A549 (cell line): ENCODE measurements at regions of chr15 and their contacts with region 1.

Region 1: GRCh38 chr15:75801859-75802593 is 41.2 kb upstream of the UBE2Q2 start:
- DNase-seq: peak; percentile 73 to 96
- ATAC-seq: peak; percentile 99 to 100
- H3K4me3 ChIP-seq: peak overlapping the region; percentile 34
- H3K27ac ChIP-seq: peak overlapping the region; percentile 16 to 66; a peak in 3 of 6 replicates
- H3K4me1 ChIP-seq: peaks cover 4% of the 10 kb centered on the region; the same call in 1 of the 3 replicates
- CTCF ChIP-seq: peak; percentile 98
- EP300 ChIP-seq: no peak
- POLR2A ChIP-seq: no peak
- RAD21 ChIP-seq: peak; percentile 94 to 99

Region 2: DNA sequence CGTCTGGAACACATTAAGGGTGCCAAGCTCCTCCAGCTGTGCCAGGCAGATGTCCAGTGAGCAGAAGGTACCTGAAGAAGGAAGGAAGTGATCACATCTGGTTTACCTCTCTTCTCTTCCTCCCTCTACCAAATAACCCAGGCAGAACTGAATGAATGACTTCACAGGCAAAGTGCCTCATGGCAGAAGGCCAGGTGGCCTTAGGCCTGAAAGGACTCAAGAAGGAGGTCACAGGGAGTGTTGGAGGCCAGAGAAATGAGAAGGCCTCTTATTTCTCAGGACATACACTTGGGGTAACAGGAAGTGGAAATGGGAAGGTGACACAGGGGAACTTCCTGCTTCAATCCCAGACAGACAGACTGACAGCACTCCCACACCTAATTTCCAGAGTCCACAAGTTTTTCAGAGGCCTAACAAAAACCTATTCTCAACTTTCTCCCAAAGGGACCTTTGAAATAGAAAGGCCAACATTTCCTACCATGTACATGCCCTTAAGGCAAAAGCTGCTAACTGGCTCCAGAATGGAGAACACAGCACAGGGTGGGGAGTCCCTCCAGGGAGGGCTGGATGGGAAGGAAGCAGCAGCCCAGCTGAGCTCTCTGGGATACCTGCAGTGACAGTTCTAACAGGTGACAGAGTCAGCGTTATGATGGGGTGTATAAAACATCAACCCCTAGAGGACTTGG is 333.0 kb before region 1 on chr15:
- CTCF ChIA-PET with region 1: no interaction called
- POLR2A ChIA-PET with region 1: no interaction called
- DNase-seq: no peak
- ATAC-seq: no peak
- H3K4me3 ChIP-seq: no peak overlapping the region
- H3K27ac ChIP-seq: no peak overlapping the region
- H3K4me1 ChIP-seq: no peaks in the 10 kb centered on the region
- CTCF ChIP-seq: no peak
- EP300 ChIP-seq: no peak
- POLR2A ChIP-seq: no peak
- RAD21 ChIP-seq: no peak

Region 3: DNA sequence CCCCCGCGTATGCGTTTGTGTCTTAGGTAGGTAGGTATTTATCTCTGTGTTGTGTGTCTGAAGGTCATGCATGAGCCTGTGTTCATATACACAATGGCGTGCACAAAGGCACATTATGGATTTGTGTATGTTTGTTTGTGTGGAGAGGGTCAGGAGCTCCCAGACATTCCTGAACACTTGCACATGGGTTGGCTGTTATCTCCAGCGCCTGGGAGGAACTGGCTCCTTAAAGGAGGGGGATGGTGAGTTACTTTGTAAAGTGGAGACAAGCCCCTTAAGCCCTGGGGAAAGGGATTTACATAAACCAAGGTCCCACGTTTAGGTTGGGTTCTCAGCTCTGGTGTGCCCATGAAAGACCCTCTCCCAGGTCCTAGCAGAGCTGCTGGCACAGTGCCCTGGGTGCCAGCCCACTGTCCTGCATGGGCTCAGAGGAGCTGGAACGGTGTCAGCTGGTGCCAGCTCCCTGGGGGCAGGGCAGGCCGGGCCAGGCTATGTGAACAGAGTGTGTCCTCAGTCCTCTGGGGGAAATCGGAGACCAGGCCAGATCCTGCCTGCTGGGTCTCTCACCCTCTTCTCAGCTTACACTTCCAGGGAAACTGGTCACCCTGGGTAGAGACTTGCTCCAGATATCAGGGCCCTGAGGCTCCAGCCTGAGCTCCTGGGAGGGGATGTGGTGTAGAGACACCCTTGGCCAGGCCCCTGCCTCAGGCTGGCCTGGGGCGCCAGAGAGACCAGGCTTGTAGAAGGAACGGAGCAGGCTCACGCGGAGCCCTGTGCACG is 129.2 kb before region 1 on chr15:
- CTCF ChIA-PET with region 1: interaction called, 13 read pairs
- POLR2A ChIA-PET with region 1: no interaction called
- DNase-seq: peak in 1 of 2 experiments; percentile 32
- ATAC-seq: peak; percentile 1 to 38; a peak in 3 of 6 replicates
- H3K4me3 ChIP-seq: no peak overlapping the region
- H3K27ac ChIP-seq: peak overlapping the region; percentile 66 to 78
- H3K4me1 ChIP-seq: peaks cover 32% of the 10 kb centered on the region
- CTCF ChIP-seq: no peak
- EP300 ChIP-seq: no peak
- POLR2A ChIP-seq: no peak
- RAD21 ChIP-seq: no peak

Region 4: DNA sequence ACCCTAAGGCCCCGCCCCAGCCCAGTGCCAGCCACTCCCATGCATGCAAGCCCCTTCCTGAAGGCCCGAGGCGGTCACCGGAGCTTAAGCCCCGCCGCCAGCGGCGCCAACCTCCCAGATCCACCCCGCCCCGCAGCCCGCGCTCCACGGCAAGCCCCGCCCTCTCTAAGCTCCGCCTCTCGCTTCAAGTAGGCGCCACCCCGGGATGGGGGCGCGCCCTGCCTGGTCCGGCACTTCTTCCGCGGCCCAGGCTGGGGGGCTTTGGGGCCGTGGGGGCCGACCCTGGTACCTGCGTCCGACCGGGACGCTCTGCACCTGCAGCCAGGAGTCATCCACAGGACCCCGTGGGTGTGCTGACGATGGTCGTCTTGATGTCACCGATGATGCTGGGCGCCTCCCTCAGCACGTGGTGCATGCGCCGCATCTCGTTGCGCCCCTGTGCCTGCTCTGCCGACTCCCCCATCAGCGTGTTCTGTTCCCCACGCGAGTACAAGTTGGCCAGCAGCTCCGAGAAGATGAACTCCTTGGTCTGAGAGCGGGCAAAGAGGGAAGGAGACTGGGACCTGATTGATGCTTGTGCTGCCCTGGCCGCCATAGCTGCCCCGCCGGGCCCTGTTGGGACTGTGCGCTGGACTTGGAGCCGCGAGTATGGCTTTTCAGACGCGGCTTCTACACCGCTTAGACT is 63.2 kb before region 1 on chr15:
- CTCF ChIA-PET with region 1: interaction called, 350 read pairs
- POLR2A ChIA-PET with region 1: interaction called, 3 read pairs
- DNase-seq: peak; percentile 96 to 97
- ATAC-seq: peak; percentile 92 to 98
- H3K4me3 ChIP-seq: peak overlapping the region; percentile 87
- H3K27ac ChIP-seq: peak overlapping the region; percentile 81 to 94
- H3K4me1 ChIP-seq: 0 out of 3 replicates have a peak, but pooled peaks cover 3% of the 10 kb centered on the region
- CTCF ChIP-seq: no peak
- EP300 ChIP-seq: no peak
- POLR2A ChIP-seq: peak; percentile 45
- RAD21 ChIP-seq: no peak

Region 5: DNA sequence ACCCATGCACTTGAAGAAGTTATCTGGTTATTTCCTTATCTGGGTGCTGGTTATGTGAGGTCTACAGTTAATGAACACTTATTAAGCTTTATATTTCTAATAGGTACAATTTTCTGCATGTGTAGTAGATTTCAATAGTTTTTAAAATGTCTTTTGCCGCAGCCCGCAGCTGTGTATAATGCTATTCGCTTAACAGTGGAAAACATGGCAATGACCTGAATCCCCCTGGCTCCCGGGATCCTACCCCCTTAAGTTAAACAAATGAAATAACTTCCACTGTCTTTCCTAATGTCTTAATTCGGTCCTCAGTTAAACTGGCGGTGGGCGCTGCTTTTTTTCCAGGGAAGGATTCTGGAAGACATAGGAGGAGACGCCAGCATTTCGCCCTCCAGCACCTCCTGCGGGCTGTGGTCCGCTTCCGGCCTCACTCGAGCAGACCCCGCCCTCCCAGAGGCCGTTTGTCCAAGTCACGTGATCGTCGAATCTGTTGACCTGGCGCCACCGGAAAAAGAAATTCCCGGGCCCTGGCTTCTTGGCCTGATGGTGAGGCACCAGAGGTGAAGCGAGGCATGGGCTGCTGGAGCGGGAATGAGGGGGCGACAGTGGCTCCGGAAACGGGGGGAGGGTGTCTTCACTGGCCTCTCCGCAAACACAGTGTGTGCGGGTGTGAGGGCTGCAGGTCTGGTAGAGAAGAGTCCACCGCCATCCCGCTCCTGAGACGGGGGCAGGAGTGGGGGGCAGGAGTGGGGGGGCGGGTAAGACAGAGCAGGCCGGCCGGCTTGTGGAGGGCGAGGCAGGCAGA is 43.8 kb before region 1 on chr15:
- CTCF ChIA-PET with region 1: interaction called, 18 read pairs
- POLR2A ChIA-PET with region 1: no interaction called
- DNase-seq: peak; percentile 94 to 98
- ATAC-seq: peak; percentile 96 to 99
- H3K4me3 ChIP-seq: peak overlapping the region; percentile 56
- H3K27ac ChIP-seq: peak overlapping the region; percentile 86 to 87
- H3K4me1 ChIP-seq: peaks cover 7% of the 10 kb centered on the region; the same call in 2 of the 3 replicates
- CTCF ChIP-seq: peak; percentile 37; the same call in 2 of the 3 replicates
- EP300 ChIP-seq: no peak
- POLR2A ChIP-seq: peak; percentile 71
- RAD21 ChIP-seq: 0 out of 5 replicates have a peak, but pooled peaks of 1 of the 2 experiments have one; percentile 10

Region 6: GRCh38 chr15:75782926-75783325 is 19.1 kb before region 1 on chr15:
- CTCF ChIA-PET with region 1: interaction called, 26 read pairs
- POLR2A ChIA-PET with region 1: no interaction called
- DNase-seq: no peak
- ATAC-seq: no peak
- H3K4me3 ChIP-seq: no peak overlapping the region
- H3K27ac ChIP-seq: no peak overlapping the region
- H3K4me1 ChIP-seq: peaks cover 3% of the 10 kb centered on the region; the same call in 1 of the 3 replicates
- CTCF ChIP-seq: no peak
- EP300 ChIP-seq: no peak
- POLR2A ChIP-seq: no peak
- RAD21 ChIP-seq: no peak

Region 7: DNA sequence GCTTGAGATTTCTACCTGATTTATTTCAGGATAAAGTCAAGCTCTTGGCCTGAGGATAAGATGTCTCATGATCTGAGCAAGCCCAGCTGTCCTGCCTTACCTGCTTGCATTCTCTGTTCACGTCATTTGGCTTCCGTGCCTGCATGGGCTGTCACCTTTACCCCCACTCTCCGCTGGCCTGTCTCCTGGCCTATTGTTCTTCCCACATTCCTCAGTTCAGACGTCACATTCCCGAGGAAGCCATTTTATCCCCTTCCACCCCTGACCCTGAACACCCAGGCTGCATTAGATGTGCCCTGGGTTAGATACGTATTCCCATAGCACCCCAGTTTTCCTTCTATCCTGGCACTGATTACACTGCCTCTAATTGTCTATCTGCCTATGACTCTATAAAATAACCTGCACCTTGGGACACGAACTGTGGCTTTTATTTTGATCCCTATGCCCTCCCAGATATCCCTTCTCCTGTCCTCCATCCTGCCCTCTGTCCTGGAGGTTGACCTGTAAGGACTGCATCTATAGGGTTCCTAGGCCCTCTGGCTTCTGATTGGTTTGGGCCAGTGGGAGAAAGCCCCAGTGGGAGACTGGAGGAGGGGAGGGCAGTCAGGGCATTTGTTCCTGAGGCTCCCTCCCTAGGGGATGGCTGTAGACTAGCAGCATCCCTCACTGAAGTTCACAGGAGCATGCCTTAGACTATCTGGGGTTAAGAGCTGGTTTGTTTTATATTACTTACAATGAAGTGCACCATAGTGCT is 22.0 kb after region 1 on chr15:
- CTCF ChIA-PET with region 1: interaction called, 27 read pairs
- POLR2A ChIA-PET with region 1: no interaction called
- DNase-seq: peak in 1 of 2 experiments; percentile 25
- ATAC-seq: peak; percentile 22 to 69; a peak in 3 of 6 replicates
- H3K4me3 ChIP-seq: no peak overlapping the region
- H3K27ac ChIP-seq: no peak overlapping the region
- H3K4me1 ChIP-seq: no peaks in the 10 kb centered on the region
- CTCF ChIP-seq: no peak
- EP300 ChIP-seq: no peak
- POLR2A ChIP-seq: no peak
- RAD21 ChIP-seq: no peak

Region 8: GRCh38 chr15:75872403-75872990 is 70.5 kb after region 1 on chr15:
- CTCF ChIA-PET with region 1: no interaction called
- POLR2A ChIA-PET with region 1: no interaction called
- DNase-seq: no peak
- ATAC-seq: no peak
- H3K4me3 ChIP-seq: no peak overlapping the region
- H3K27ac ChIP-seq: no peak overlapping the region
- H3K4me1 ChIP-seq: no peaks in the 10 kb centered on the region
- CTCF ChIP-seq: no peak
- EP300 ChIP-seq: no peak
- POLR2A ChIP-seq: no peak
- RAD21 ChIP-seq: no peak

Region 9: GRCh38 chr15:76006136-76006778 is 204.2 kb after region 1 on chr15:
- CTCF ChIA-PET with region 1: no interaction called
- POLR2A ChIA-PET with region 1: no interaction called
- DNase-seq: no peak
- ATAC-seq: no peak
- H3K4me3 ChIP-seq: no peak overlapping the region
- H3K27ac ChIP-seq: no peak overlapping the region
- H3K4me1 ChIP-seq: no peaks in the 10 kb centered on the region; the same call in 2 of the 3 replicates
- CTCF ChIP-seq: no peak
- EP300 ChIP-seq: no peak
- POLR2A ChIP-seq: no peak
- RAD21 ChIP-seq: no peak

Region 10: GRCh38 chr15:76127880-76128279 is 325.9 kb after region 1 on chr15:
- CTCF ChIA-PET with region 1: no interaction called
- POLR2A ChIA-PET with region 1: no interaction called
- DNase-seq: no peak
- ATAC-seq: no peak
- H3K4me3 ChIP-seq: no peak overlapping the region
- H3K27ac ChIP-seq: no peak overlapping the region
- H3K4me1 ChIP-seq: no peaks in the 10 kb centered on the region
- CTCF ChIP-seq: no peak
- EP300 ChIP-seq: no peak
- POLR2A ChIP-seq: no peak
- RAD21 ChIP-seq: no peak